ENCODE measurements at regions of chr14 and their contacts with region 1.

Region 1: DNA sequence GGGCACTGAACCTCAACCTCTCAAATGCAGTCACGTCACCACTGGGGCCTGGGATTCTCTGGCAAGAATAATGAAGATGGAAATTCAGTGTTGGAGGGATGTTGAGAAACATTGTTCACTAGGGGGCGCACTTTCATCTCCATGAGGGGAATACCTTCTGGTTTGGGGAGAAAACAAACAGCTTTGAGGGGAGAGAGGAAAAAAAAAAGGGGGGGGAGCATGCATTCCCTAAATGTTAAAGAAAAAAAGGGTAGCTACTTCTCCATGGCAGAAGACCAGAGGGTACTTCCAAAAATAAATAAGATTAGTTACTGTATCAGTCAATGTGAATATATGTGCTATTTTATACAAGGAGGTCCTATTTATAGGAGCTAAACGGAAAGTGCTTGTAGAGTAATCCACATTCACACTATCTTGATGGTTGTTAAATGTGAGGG is 5.8 kb upstream of the TBPL2 start:
- DNase-seq: peak; percentile 80
- H3K4me3 ChIP-seq: no peak overlapping the region
- H3K27ac ChIP-seq: no peak overlapping the region
- H3K4me1 ChIP-seq: peaks cover 39% of the 10 kb centered on the region
- H3K27me3 ChIP-seq: no peaks in the 10 kb centered on the region
- CTCF ChIP-seq: peak; percentile 58 to 65
- POLR2A ChIP-seq: no peak

Region 2: GRCh38 chr14:55399852-55400251 is 46.4 kb before region 1 on chr14:
- CTCF ChIA-PET with region 1: no interaction called
- POLR2A ChIA-PET with region 1: no interaction called
- dilution Hi-C with region 1: no loop called
- intact Hi-C with region 1: no loop called
- DNase-seq: peak; percentile 52
- H3K4me3 ChIP-seq: no peak overlapping the region
- H3K27ac ChIP-seq: peak overlapping the region; percentile 74
- H3K4me1 ChIP-seq: peaks cover 18% of the 10 kb centered on the region
- H3K27me3 ChIP-seq: no peaks in the 10 kb centered on the region
- CTCF ChIP-seq: no peak
- POLR2A ChIP-seq: no peak

Region 3: DNA sequence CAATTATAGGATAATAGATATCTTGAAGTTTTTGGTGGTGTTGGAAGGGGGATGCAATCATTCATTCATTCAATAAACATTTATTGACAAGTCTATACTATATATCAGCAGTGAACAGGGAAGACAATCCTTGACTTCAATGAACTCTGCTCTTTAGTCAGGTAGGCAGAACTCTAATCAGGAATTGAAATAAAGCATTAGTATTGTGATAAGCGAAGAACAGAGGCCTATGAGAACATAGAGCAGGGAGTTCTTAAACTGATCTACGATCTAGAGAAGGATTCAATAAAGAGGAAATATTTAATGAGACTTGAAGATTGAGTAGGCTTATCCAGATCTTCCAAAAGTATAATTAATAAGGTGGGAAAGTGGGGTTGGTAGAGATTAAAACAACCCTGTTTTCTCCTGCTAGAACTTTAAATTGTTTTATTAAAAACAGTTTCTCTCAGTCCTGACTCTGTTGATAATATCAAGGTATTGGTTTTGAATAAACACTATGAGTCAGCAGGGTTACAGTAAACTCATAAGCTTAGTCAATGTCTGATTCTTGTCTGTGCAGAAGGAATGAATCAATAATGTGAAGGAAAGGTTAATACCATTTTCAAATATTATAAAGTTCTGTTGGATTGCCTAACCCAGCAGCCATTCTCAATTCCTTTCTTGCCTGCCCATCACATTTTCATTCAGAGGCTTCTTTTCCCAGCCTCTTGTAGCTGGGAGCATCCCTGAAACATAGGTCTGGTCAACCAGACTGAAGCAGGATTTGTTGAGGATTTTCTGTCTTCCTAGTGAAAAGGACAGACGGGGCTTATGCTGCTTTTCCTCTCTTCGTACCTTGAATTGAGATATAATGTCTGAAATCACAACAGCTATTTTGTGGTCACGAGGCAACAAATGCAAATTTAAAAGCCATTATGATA is 94.9 kb after region 1 on chr14:
- CTCF ChIA-PET with region 1: interaction called, 15 read pairs
- POLR2A ChIA-PET with region 1: no interaction called
- dilution Hi-C with region 1: no loop called
- intact Hi-C with region 1: no loop called
- DNase-seq: peak; percentile 35
- H3K4me3 ChIP-seq: no peak overlapping the region
- H3K27ac ChIP-seq: no peak overlapping the region
- H3K4me1 ChIP-seq: peaks cover 12% of the 10 kb centered on the region
- H3K27me3 ChIP-seq: no peaks in the 10 kb centered on the region
- CTCF ChIP-seq: no peak
- POLR2A ChIP-seq: no peak

Region 4: GRCh38 chr14:55585854-55586253 is 139.6 kb after region 1 on chr14:
- CTCF ChIA-PET with region 1: interaction called, 34 read pairs
- POLR2A ChIA-PET with region 1: no interaction called
- dilution Hi-C with region 1: no loop called
- intact Hi-C with region 1: no loop called
- DNase-seq: peak; percentile 86
- H3K4me3 ChIP-seq: no peak overlapping the region
- H3K27ac ChIP-seq: no peak overlapping the region
- H3K4me1 ChIP-seq: peaks cover 20% of the 10 kb centered on the region
- H3K27me3 ChIP-seq: no peaks in the 10 kb centered on the region
- CTCF ChIP-seq: no peak
- POLR2A ChIP-seq: no peak

Region 5: GRCh38 chr14:55624913-55625312 is 178.7 kb after region 1 on chr14:
- CTCF ChIA-PET with region 1: interaction called, 15 read pairs
- POLR2A ChIA-PET with region 1: no interaction called
- dilution Hi-C with region 1: no loop called
- intact Hi-C with region 1: loop called (anchors 10 kb)
- DNase-seq: no peak
- H3K4me3 ChIP-seq: no peak overlapping the region
- H3K27ac ChIP-seq: no peak overlapping the region
- H3K4me1 ChIP-seq: no peaks in the 10 kb centered on the region
- H3K27me3 ChIP-seq: no peaks in the 10 kb centered on the region
- CTCF ChIP-seq: no peak
- POLR2A ChIP-seq: no peak

Region 6: GRCh38 chr14:55673048-55673447 is 226.8 kb after region 1 on chr14:
- CTCF ChIA-PET with region 1: interaction called, 10 read pairs
- POLR2A ChIA-PET with region 1: no interaction called
- dilution Hi-C with region 1: no loop called
- intact Hi-C with region 1: no loop called
- DNase-seq: no peak
- H3K4me3 ChIP-seq: no peak overlapping the region
- H3K27ac ChIP-seq: no peak overlapping the region
- H3K4me1 ChIP-seq: no peaks in the 10 kb centered on the region
- H3K27me3 ChIP-seq: no peaks in the 10 kb centered on the region
- CTCF ChIP-seq: no peak
- POLR2A ChIP-seq: no peak

Region 7: DNA sequence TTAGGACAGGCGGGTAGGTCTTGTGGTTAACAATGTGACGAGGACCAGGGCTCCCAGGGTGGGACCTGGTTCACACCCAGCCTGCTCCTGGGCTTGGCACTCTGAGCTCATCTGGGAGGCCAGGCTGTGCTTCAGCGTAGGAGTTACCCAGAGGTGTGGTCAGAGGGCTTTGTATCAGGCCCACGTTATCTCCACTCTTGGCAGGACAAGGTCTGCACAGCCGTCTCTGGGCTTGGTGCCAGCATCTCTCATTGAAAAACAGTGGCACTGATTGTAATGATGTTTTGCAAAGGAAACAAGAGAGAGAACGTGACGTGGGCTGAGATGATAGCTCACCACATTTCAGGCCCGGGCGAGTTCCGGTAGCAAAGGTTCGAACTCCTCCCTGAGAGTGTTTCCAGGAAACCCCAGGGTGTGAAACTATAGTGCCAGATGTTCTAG is 360.8 kb after region 1 on chr14:
- CTCF ChIA-PET with region 1: no interaction called
- POLR2A ChIA-PET with region 1: no interaction called
- dilution Hi-C with region 1: no loop called
- intact Hi-C with region 1: loop called (anchors 10 kb)
- DNase-seq: peak; percentile 98
- H3K4me3 ChIP-seq: no peak overlapping the region
- H3K27ac ChIP-seq: peak overlapping the region; percentile 82
- H3K4me1 ChIP-seq: peaks cover 33% of the 10 kb centered on the region
- H3K27me3 ChIP-seq: no peaks in the 10 kb centered on the region
- CTCF ChIP-seq: no peak
- POLR2A ChIP-seq: no peak

Region 8: DNA sequence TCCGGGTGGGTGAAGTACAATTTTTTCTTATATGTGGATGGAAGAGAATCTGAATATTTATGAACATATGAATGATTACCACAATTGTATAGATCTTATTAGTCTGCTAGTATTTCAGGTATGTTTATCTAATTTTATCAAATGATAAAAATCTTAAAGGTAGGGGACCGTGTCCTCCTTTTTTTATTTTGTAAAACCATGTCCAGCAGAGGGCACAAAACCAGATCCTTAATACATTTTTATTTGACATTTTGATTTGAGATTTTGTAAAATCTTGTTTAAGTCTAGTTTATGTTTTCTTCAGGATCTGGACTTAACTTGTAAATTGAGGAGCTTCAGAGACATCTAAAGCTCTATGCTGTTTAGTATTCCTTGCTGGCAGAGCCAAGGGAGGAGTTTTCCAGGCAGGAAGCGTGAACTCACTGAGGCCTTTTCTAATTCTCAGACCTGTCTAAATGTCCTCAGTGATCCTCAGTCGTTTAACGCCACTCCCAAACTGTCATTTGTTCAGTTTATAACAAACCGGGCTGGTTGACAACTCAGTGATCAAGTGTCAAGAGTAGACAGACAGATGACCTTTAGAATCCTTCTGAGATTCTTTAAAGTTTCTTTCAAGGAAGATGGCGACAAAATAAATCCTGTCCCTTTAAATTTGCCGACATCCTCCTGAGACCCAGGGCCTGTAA is 397.6 kb after region 1 on chr14:
- CTCF ChIA-PET with region 1: no interaction called
- POLR2A ChIA-PET with region 1: no interaction called
- dilution Hi-C with region 1: no loop called
- intact Hi-C with region 1: no loop called
- DNase-seq: peak; percentile 25
- H3K4me3 ChIP-seq: no peak overlapping the region
- H3K27ac ChIP-seq: no peak overlapping the region
- H3K4me1 ChIP-seq: no peaks in the 10 kb centered on the region
- H3K27me3 ChIP-seq: no peaks in the 10 kb centered on the region
- CTCF ChIP-seq: peak in 1 of 2 donors; percentile 7
- POLR2A ChIP-seq: no peak

Region 9: GRCh38 chr14:56482310-56482911 is 1036.2 kb after region 1 on chr14:
- CTCF ChIA-PET with region 1: interaction called, 196 read pairs
- POLR2A ChIA-PET with region 1: no interaction called
- dilution Hi-C with region 1: no loop called
- intact Hi-C with region 1: loop called (anchors 2 kb)
- DNase-seq: peak; percentile 16
- H3K4me3 ChIP-seq: no peak overlapping the region
- H3K27ac ChIP-seq: no peak overlapping the region
- H3K4me1 ChIP-seq: no peaks in the 10 kb centered on the region
- H3K27me3 ChIP-seq: peaks cover 1 to 2% of the 10 kb centered on the region in 2 experiments
- CTCF ChIP-seq: peak; percentile 16 to 26
- POLR2A ChIP-seq: no peak